ENCODE measurements at regions of chr1 and their contacts with region 1.

Region 1: GRCh38 chr1:6205849-6206519 is at the start of gene RNF207:
- DNase-seq: no peak
- H3K4me3 ChIP-seq: peak within 1 kb of the TSS; percentile 58
- CTCF ChIP-seq: no peak

Region 2: DNA sequence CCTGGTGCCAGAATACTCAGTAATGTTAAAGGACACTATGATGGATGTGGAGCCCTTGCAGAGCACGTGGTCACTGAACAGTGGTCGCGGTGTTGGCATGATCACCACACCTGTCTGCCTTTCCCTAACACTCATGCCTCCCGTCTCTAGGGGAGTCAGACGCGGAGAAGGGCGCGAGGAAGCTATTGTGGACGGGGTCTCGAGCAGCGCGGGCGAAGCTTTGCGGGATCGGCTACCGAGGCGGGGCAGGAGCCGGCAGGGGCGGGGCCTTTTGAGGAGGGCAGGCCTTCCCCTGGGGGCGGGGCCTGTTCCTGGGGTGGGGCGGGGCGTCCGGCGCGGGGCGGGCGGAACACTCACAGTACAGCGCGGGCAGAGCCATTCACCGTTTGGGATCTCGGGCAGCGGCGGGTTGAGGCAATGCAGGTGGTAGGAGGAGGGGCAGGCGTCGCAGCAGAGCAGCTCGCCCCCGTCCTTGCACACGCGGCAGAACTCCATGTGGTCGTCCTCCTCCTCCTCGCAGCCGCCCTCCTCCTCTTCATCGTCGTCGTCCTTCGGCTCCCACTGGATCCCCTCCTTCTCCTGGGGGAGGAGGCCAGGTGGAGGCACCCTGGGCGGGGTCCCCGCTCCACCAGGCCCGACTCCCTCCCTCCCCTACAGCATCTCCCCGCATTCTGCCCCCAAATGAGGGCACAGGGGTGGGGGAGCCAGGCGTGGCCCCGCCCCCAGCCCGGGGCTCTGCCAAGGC is 57.3 kb before region 1 on chr1:
- CTCF ChIA-PET with region 1: no interaction called
- POLR2A ChIA-PET with region 1: no interaction called
- DNase-seq: no peak
- H3K4me3 ChIP-seq: no peak overlapping the region
- CTCF ChIP-seq: no peak

Region 3: GRCh38 chr1:6185635-6186382 is 20.2 kb before region 1 on chr1:
- CTCF ChIA-PET with region 1: interaction called, 11 read pairs
- POLR2A ChIA-PET with region 1: no interaction called
- DNase-seq: no peak
- H3K4me3 ChIP-seq: no peak overlapping the region
- CTCF ChIP-seq: peak; percentile 35

Region 4: GRCh38 chr1:6222636-6223035 is 16.7 kb after region 1 on chr1:
- CTCF ChIA-PET with region 1: interaction called, 62 read pairs
- POLR2A ChIA-PET with region 1: interaction called, 3 read pairs
- DNase-seq: no peak
- H3K4me3 ChIP-seq: no peak overlapping the region
- CTCF ChIP-seq: no peak

Region 5: DNA sequence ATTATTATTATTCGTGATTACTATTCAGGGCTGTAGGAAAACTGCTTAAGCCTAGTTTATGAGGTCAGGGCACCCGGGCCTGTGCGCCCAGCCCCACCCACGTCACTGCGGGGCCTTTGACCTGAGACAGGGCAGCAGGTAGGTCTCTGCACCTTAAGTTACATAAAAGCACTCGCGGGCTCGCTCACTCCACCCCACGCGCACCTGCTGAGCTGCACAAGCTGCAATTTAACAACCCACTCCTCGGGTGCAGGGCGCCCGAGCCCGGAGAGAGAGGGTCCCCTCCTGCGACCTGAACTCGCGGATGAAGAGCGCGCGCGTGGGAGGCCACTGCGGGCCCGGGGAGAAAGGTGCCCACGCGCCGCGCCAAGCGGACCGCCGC is 29.3 kb after region 1 on chr1:
- CTCF ChIA-PET with region 1: interaction called, 25 read pairs
- POLR2A ChIA-PET with region 1: no interaction called
- DNase-seq: no peak
- H3K4me3 ChIP-seq: peak overlapping the region; percentile 73
- CTCF ChIP-seq: no peak

Region 6: DNA sequence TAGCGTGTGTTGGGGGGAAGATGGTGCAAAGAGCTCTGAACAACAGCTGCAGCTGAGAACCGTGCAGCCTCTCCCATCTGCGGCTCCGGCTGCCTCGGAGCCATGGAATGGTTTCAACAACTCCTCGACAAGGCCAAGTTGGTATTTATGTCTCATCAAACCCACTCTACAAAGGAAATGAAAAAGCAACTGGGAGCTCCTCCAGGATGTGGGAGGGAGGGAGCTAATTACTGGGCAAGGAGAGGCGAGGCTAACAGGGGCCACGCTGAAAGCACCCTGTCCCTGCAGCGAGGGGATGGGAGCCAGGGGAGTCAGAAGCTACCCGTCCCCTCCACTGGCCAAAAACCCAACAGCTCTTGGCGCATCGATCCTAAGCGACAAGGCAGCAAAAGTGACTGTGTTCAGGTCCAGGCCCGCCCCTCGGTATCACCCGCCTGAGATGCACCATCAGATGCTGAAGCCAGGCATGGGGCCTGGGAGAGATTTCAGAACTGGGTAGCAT is 124.5 kb after region 1 on chr1:
- CTCF ChIA-PET with region 1: no interaction called
- POLR2A ChIA-PET with region 1: no interaction called
- DNase-seq: peak; percentile 24
- H3K4me3 ChIP-seq: no peak overlapping the region
- CTCF ChIP-seq: no peak